Activated CD4-positive, alpha-beta memory T cell treated with anti-CD3 and anti-CD28 coated beads for 36 hours (primary cell): ENCODE measurements at regions of chrX and their contacts with region 1.

Region 1: GRCh38 chrX:65674204-65674893 is 6.9 kb downstream of the MSN start:
- DNase-seq: no peak
- H3K4me3 Mint-ChIP-seq: peak overlapping the region; percentile 80
- H3K27ac Mint-ChIP-seq: peak overlapping the region; percentile 97
- H3K4me1 Mint-ChIP-seq: peaks cover 63% of the 10 kb centered on the region
- H3K27me3 Mint-ChIP-seq: no peaks in the 10 kb centered on the region

Region 2: DNA sequence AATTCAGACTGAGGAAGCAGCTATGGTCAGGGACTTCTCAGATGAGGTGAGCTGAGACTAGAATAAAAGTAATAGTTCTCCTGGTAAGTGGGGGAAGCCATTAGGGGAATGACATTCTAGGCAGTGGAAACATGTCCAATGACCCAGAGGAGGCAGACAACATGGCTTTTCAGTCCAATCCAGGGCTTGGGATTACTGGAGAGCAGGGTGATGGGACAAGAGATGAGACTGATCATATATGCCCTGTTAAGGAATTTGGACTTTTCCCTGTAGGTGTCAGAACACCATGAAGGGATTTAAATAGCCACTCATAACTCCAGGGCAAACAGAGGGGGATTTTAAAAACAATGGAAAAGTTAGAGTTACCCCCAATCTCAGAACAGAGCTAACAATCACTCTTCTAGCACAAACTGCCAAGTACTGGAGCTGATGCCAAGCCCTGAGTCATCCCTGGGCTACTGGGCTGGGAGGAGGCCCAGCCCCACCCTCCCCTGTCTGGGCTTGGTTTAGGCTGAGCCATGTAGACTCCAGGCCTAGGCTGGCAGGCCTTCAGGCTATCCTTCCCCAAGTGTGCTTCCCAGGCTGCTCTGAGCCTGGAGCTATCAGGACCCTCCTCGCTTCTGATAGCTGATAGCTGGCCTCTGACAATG is 29.6 kb before region 1 on chrX:
- CTCF ChIA-PET with region 1: no interaction called
- POLR2A ChIA-PET with region 1: no interaction called
- intact Hi-C with region 1: no loop called
- DNase-seq: peak; percentile 43
- H3K4me3 Mint-ChIP-seq: no peak overlapping the region
- H3K27ac Mint-ChIP-seq: no peak overlapping the region
- H3K4me1 Mint-ChIP-seq: peaks cover 17% of the 10 kb centered on the region
- H3K27me3 Mint-ChIP-seq: no peaks in the 10 kb centered on the region

Region 3: DNA sequence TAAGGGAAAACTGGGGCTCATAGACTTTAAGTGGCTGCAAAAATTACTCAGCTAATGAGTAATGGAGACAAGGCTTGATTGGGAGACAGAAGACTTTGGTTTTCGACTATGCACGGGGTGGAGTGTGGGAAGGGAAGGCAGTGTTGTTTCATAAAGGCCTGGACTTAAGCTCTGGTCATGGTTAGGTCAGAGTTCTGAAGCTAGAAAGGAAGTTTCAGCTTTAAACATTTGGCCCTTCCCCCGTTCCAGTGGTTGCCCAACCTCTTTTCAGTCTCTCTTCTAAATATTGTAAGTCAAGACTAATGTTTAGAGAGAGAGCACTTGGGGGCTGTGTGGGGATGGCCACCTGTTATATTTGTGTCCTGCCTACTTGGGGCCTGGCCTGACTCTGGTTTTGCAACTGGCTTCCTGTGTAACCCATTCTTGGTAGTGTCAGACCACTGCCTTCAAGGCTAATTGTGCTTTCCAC is 14.1 kb after region 1 on chrX:
- CTCF ChIA-PET with region 1: interaction called, 5 read pairs
- POLR2A ChIA-PET with region 1: interaction called, 19 read pairs
- intact Hi-C with region 1: no loop called
- DNase-seq: peak; percentile 31
- H3K4me3 Mint-ChIP-seq: peak overlapping the region; percentile 4
- H3K27ac Mint-ChIP-seq: peak overlapping the region; percentile 76
- H3K4me1 Mint-ChIP-seq: peaks cover 91% of the 10 kb centered on the region
- H3K27me3 Mint-ChIP-seq: no peaks in the 10 kb centered on the region

Region 4: GRCh38 chrX:65706041-65706828 is 31.9 kb after region 1 on chrX:
- CTCF ChIA-PET with region 1: interaction called, 3 read pairs
- POLR2A ChIA-PET with region 1: interaction called, 8 read pairs
- intact Hi-C with region 1: loop called (anchors 1 kb)
- DNase-seq: peak; percentile 80
- H3K4me3 Mint-ChIP-seq: peak overlapping the region; percentile 33
- H3K27ac Mint-ChIP-seq: peak overlapping the region; percentile 96
- H3K4me1 Mint-ChIP-seq: peaks cover 71% of the 10 kb centered on the region
- H3K27me3 Mint-ChIP-seq: no peaks in the 10 kb centered on the region

Region 5: GRCh38 chrX:65948103-65948502 is 273.8 kb after region 1 on chrX:
- CTCF ChIA-PET with region 1: no interaction called
- POLR2A ChIA-PET with region 1: no interaction called
- intact Hi-C with region 1: no loop called
- DNase-seq: no peak
- H3K4me3 Mint-ChIP-seq: no peak overlapping the region
- H3K27ac Mint-ChIP-seq: no peak overlapping the region
- H3K4me1 Mint-ChIP-seq: peaks cover 11% of the 10 kb centered on the region
- H3K27me3 Mint-ChIP-seq: no peaks in the 10 kb centered on the region

Region 6: DNA sequence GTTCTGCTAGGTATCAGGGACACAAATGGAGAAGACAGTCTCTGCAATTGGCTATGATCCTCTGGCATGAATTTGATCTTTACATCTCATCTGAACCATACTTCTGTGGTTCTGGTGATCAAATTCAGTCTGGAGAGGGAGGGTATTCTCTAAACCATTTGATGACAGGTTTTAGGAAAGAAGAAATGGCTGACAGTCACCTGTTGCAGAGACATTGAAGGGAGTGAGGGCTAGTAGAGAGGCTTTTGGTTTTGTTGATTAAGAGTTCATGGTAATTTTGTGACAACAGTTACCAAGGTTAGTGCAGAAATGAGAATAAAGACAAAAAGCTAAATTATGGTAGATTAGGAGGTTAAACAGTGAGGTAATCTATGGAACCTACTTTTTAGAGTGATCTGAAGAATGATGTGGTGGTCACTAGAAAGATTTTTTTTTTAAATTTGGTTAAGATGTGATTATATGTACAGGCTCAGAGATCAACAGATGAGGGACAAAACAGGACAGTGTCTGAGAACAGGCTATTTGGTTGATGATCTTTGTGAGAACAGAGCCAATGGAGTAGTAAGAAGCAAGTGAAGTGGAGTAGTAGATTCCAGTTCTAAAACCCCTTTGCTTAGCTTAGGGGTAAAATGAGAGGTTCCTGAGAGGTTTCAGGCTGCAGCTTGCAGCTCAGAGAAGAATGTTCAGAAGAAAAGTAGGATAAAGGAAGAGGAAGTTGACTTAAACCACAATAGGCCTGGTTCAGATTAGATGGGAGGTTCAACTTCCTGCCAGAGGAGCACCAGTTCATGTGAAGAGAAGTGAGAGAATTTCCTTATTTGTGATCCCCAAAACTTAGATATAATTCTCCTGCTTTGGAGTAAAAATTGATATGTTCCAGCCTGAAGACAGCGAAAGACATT is 330.8 kb after region 1 on chrX:
- CTCF ChIA-PET with region 1: no interaction called
- POLR2A ChIA-PET with region 1: no interaction called
- intact Hi-C with region 1: no loop called
- DNase-seq: no peak
- H3K4me3 Mint-ChIP-seq: no peak overlapping the region
- H3K27ac Mint-ChIP-seq: peak overlapping the region; percentile 81
- H3K4me1 Mint-ChIP-seq: peaks cover 59% of the 10 kb centered on the region
- H3K27me3 Mint-ChIP-seq: no peaks in the 10 kb centered on the region